ENCODE measurements at regions of chr17 and their contacts with region 1.

Region 1: GRCh38 chr17:63478791-63479494 is 2.1 kb downstream of the ACE start:
- DNase-seq: peak; percentile 80
- ATAC-seq: peak; percentile 88
- H3K4me3 ChIP-seq: no peak overlapping the region
- H3K27ac ChIP-seq: no peak overlapping the region
- H3K4me1 ChIP-seq: peaks cover 28% of the 10 kb centered on the region
- H3K27me3 ChIP-seq: peaks cover 27 to 87% of the 10 kb centered on the region in 2 experiments
- CTCF ChIP-seq: peak; percentile 98
- EP300 ChIP-seq: no peak
- POLR2A ChIP-seq: no peak
- RAD21 ChIP-seq: peak; percentile 88

Region 2: GRCh38 chr17:63369233-63369632 is 109.7 kb before region 1 on chr17:
- CTCF ChIA-PET with region 1: no interaction called
- POLR2A ChIA-PET with region 1: no interaction called
- in situ Hi-C with region 1: no loop called
- intact Hi-C with region 1: no loop called
- DNase-seq: no peak
- ATAC-seq: no peak
- H3K4me3 ChIP-seq: no peak overlapping the region
- H3K27ac ChIP-seq: no peak overlapping the region
- H3K4me1 ChIP-seq: no peaks in the 10 kb centered on the region
- H3K27me3 ChIP-seq: peaks cover 0 to 17% of the 10 kb centered on the region in 2 experiments; a peak in 2 of 5 replicates
- CTCF ChIP-seq: no peak
- EP300 ChIP-seq: no peak
- POLR2A ChIP-seq: no peak
- RAD21 ChIP-seq: no peak

Region 3: DNA sequence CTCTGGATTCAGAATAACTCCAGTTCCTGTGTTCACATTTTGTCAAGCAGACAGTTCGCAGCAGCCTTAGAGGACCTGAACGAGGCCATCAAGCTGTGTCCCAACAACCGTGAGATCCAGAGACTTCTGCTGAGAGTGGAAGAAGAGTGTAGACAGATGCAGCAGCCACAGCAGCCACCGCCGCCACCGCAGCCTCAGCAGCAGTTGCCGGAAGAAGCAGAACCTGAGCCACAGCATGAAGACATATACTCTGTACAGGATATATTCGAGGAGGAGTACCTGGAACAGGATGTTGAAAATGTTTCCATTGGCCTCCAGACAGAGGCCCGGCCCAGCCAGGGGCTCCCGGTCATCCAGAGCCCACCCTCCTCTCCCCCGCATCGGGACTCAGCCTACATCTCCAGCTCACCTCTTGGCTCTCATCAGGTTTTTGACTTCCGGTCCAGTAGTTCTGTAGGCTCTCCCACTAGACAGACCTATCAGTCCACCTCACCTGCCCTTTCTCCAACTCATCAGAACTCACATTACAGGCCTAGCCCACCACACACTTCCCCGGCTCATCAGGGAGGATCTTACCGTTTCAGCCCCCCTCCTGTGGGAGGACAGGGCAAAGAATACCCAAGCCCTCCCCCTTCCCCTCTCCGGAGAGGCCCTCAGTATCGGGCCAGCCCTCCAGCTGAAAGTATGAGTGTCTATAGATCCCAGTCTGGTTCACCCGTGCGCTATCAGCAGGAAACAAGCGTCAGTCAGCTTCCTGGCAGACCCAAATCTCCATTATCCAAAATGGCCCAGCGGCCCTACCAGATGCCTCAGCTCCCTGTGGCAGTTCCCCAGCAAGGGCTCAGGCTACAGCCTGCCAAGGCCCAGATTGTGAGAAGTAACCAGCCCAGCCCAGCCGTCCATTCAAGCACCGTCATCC is 58.7 kb before region 1 on chr17:
- CTCF ChIA-PET with region 1: interaction called, 53 read pairs
- POLR2A ChIA-PET with region 1: no interaction called
- in situ Hi-C with region 1: loop called (anchors 5 kb)
- intact Hi-C with region 1: loop called (anchors 1 kb)
- DNase-seq: no peak
- ATAC-seq: no peak
- H3K4me3 ChIP-seq: no peak overlapping the region
- H3K27ac ChIP-seq: no peak overlapping the region
- H3K4me1 ChIP-seq: no peaks in the 10 kb centered on the region
- H3K27me3 ChIP-seq: peaks cover 20 to 98% of the 10 kb centered on the region in 2 experiments
- CTCF ChIP-seq: no peak
- EP300 ChIP-seq: no peak
- POLR2A ChIP-seq: no peak
- RAD21 ChIP-seq: no peak

Region 4: DNA sequence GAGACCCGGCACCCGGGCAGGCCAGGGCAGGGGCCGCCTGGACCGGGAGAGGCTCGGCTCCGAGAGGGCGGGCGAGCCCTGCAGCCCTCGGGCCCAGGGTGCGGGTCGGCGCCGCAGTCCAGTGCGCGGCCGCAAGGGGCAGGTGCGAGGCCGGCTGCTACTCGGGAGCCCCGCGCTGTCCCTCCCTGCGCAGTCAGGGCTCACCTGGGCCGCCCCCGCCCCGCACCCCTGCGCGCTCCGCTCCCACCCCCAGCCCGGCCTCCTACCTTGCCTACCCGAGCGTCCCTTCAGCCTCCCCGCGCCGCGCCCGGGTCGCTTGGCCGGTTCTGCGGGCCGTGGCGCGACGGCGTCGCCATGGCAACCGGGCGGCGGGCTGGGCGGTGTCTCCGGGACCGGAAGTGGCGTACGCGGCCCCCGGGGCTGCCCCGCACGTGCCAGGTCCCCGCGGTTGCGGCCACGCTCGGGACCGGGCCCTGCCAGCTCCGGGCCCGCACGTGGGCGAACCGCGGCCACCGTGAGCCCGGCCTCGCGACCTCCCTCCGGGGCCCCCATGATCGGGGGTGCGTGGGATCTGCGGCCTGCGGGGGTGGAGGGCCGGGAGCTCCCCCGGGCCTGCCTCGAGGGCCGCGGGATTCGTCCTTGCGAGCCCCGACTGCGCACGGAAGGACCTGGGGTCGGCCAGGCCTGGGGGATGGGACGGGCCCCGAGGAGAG is 32.8 kb before region 1 on chr17 and contains the start of gene CYB561:
- CTCF ChIA-PET with region 1: no interaction called
- POLR2A ChIA-PET with region 1: no interaction called
- in situ Hi-C with region 1: no loop called
- intact Hi-C with region 1: loop called (anchors 2 kb)
- DNase-seq: no peak
- ATAC-seq: peak; percentile 93
- H3K4me3 ChIP-seq: peak within 1 kb of the TSS; percentile 49 to 71 (median 52); a peak in 4 of 6 replicates
- H3K27ac ChIP-seq: no peak within 1 kb of the TSS
- H3K4me1 ChIP-seq: peaks cover 16% of the 10 kb centered on the region
- H3K27me3 ChIP-seq: peaks cover 6 to 36% of the 10 kb centered on the region in 2 experiments; a peak in 4 of 5 replicates
- CTCF ChIP-seq: peak; percentile 62
- EP300 ChIP-seq: no peak
- POLR2A ChIP-seq: no peak
- RAD21 ChIP-seq: peak; percentile 43; the same call in 1 of the 2 replicates
- total RNA-seq, gene CYB561: 3.1 and 6.7 TPM in 2 replicates

Measured in HepG2 (cell line).